Panc1 (cell line): ENCODE measurements at regions of chr12 and their contacts with region 1.

Region 1: DNA sequence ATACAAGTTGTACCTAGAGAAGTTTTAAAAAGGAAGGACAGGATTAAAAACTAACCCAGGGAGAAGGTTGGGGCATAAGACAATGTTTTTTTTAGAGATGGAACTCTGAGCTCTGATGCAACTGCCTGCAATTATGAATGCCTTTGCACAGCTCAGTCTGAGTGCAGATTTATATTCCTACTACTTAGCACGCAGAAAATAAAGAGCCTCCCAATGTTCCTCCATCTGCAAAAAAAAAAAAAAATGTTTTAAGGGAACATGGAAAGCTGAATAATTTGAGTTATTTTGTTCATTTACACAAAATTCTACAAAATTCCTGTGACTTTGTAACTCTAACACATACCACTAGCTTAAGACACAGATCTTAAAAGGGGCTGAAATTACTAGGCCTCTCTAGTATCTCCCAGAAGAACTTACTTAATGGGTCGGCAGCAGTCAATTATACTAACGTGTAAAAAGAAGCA is 15.7 kb downstream of the CLIP1 start:
- DNase-seq: no peak
- ATAC-seq: no peak
- H3K4me3 ChIP-seq: no peak overlapping the region
- H3K27ac ChIP-seq: peak overlapping the region; percentile 90
- H3K4me1 ChIP-seq: peaks cover 48% of the 10 kb centered on the region
- H3K27me3 ChIP-seq: no peaks in the 10 kb centered on the region
- CTCF ChIP-seq: no peak

Region 2: GRCh38 chr12:122148657-122149056 is 258.1 kb before region 1 on chr12:
- CTCF ChIA-PET with region 1: no interaction called
- POLR2A ChIA-PET with region 1: no interaction called
- in situ Hi-C with region 1: no loop called
- intact Hi-C with region 1: no loop called
- DNase-seq: no peak
- ATAC-seq: no peak
- H3K4me3 ChIP-seq: no peak overlapping the region
- H3K27ac ChIP-seq: no peak overlapping the region
- H3K4me1 ChIP-seq: no peaks in the 10 kb centered on the region
- H3K27me3 ChIP-seq: no peaks in the 10 kb centered on the region
- CTCF ChIP-seq: no peak

Region 3: GRCh38 chr12:122385171-122386041 is 21.3 kb before region 1 on chr12:
- CTCF ChIA-PET with region 1: interaction called, 10 read pairs
- POLR2A ChIA-PET with region 1: no interaction called
- in situ Hi-C with region 1: no loop called
- intact Hi-C with region 1: no loop called
- DNase-seq: no peak
- ATAC-seq: no peak
- H3K4me3 ChIP-seq: no peak overlapping the region
- H3K27ac ChIP-seq: no peak overlapping the region
- H3K4me1 ChIP-seq: no peaks in the 10 kb centered on the region
- H3K27me3 ChIP-seq: no peaks in the 10 kb centered on the region
- CTCF ChIP-seq: no peak